Posterior cingulate gyrus (tissue), 11 donors: ENCODE measurements at regions of chr6 and their contacts with region 1.

Region 1: GRCh38 chr6:17599885-17600526 is at the start of gene FAM8A1:
- DNase-seq: peak; percentile 96 to 100 (median 98)

Region 2: DNA sequence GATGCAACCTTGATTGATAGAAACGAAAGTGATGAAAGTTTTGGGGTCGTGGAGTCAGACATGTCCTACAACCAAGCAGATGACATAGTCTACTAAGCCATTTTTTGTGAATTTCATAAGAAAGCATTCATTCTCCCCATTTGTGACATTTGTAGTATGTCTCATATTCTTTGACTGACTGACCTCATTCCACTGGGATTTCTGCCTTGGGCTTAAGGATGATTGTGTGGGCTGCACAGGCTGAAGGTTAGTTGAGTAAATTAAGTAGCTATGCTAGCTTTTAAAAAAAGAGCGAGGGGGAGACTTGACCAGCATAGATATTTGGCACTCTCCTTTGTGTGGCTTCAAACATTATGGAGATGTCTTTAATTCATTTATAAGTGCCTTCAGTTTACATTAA is 469.2 kb before region 1 on chr6:
- intact Hi-C with region 1: no loop called
- DNase-seq: no peak

Region 3: GRCh38 chr6:17688481-17688880 is 88.5 kb after region 1 on chr6:
- intact Hi-C with region 1: no loop called
- DNase-seq: no peak

Region 4: GRCh38 chr6:17706580-17707370 is 106.8 kb after region 1 on chr6 and contains the start of gene NUP153:
- intact Hi-C with region 1: loop called (anchors 2 kb)
- DNase-seq: peak; percentile 98 to 100 (median 99)

Region 5: DNA sequence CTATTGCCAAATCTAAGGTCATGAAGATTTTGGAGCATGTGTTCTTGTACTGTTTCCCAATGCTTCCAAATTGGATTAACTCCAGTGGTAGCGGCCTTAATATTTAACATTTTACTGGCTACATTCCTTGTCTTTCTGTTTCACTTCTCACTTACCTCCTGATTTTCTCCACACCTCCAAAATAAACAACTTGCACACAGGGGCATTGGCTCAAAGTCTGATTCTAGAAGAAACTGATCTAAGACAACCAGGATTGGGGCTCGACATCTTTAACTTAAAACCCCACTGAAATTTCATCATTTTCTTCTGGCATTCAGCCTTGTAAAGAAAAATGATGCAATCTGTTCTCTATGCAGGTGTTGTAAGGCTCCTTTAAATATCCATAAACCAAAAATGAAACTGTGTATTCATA is 1679.3 kb after region 1 on chr6:
- intact Hi-C with region 1: no loop called
- DNase-seq: no peak